ENCODE measurements at regions of chr12 and their contacts with region 1.

Region 1: DNA sequence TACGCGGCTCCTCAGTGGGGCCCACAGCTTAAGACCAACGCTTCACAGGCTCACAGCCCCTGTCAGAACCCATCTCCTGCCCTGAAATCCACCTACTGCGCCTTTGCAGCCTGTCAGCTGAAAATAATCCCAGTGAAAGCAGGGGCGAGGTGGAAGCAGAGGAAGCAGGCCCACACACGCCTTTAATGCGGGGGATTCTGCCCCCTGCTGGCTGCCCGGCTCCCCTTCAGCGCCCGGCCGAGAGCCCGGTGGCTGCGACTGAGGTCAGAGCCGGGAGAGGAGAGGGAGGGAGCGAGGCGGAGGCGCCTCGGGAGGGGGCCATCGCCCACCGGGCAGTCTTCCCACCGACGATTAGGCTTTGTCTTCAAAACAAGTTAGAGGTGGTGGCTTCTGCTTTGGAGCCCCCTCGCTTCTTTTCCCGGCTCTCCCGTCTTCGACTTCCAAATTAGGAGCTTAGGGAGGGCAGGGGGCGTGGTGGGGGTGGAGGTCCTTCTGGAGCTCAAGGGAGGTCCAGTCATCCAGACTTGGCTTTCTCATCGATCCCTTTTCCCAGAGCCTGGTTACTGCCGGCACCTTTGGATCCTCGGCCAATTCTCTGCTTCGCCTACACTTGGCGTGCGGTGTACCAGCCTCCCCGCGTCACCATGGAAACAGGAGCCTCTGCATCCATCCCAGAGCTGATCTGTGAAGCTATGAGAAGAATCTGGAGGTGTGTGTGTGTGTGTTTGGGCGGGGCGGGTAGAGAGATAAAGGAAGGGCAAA is 25.2 kb upstream of the RND1 start:
- DNase-seq: peak; percentile 60 to 85 (median 78)
- H3K4me3 ChIP-seq: peak overlapping the region; percentile 22
- H3K27ac ChIP-seq: no peak overlapping the region
- H3K4me1 ChIP-seq: peaks cover 4% of the 10 kb centered on the region
- H3K27me3 ChIP-seq: no peaks in the 10 kb centered on the region
- CTCF ChIP-seq: peak; percentile 77 to 83 (median 78)
- EP300 ChIP-seq: no peak
- POLR2A ChIP-seq: no peak

Region 2: DNA sequence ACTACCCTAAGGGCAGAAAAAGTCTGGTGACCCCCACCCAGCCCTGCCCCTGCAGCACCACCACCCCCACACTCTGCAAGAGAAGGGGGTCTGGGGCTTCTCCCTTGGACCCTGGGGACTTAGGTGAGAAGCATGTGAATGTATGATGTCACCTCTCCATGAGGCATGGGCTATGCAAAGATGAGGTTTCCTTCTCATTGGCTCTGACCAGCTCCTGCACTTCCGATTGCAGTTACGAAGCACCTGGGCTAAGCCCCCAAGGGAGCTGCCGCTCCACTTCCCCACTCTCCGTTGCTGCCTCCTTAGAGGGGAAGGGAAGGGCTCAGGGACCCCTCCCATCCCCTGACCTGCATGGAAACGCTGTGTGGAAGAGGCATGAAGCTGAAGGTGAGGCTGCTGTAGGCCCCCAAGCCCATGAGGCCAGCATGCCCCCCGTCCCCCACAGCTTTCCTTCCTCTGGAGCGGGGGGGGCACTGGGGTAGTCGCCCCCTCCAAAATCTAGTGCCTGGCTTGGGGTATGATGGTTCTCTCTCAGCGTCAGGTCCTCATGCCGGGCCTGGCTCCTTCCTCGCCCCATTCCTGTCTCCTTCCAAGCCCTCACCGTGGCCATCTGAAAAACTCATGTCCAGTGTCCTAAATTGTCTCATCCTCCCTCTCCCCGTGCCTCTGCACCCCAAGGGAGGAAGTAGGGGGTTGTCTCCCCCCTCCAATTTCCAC is 33.4 kb before region 1 on chr12:
- intact Hi-C with region 1: loop called in 3 of 4 experiments (anchors 2 to 5 kb)
- DNase-seq: no peak
- H3K4me3 ChIP-seq: no peak overlapping the region
- H3K27ac ChIP-seq: no peak overlapping the region
- H3K4me1 ChIP-seq: peaks cover 2% of the 10 kb centered on the region
- H3K27me3 ChIP-seq: no peaks in the 10 kb centered on the region
- CTCF ChIP-seq: no peak
- EP300 ChIP-seq: no peak
- POLR2A ChIP-seq: no peak